T-cell (primary cell): ENCODE measurements at regions of chr1 and their contacts with region 1.

Region 1: DNA sequence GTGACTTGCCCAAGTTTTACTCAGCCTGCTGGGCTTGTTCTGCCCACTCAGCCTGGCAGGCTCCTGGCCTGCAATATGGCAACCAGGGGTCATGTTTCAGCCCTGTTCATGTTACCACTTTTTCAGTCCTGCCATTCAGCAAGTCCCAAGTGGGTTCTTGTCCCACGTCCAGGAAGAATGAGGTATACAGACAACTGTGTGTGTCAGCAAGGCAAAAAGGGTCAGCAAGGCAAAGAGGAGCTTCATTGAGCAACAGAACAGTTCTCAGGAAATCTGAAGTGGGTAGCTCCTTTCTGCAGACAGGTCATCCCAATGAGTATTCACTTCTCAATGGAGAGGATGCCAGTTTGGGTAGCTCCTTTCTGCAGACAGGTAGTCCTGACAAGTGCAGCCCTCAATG is 1233.3 kb upstream of the B3GALT2 start:
- DNase-seq: no peak
- ATAC-seq: no peak
- H3K4me3 ChIP-seq: no peak overlapping the region
- H3K4me3 Mint-ChIP-seq: no peak overlapping the region
- H3K27ac ChIP-seq: no peak overlapping the region
- H3K27ac Mint-ChIP-seq: no peak overlapping the region
- H3K4me1 ChIP-seq: no peaks in the 10 kb centered on the region
- H3K4me1 Mint-ChIP-seq: no peaks in the 10 kb centered on the region
- H3K27me3 ChIP-seq: peaks cover 0 to 4% of the 10 kb centered on the region in 2 experiments
- H3K27me3 Mint-ChIP-seq: no peaks in the 10 kb centered on the region

Region 2: DNA sequence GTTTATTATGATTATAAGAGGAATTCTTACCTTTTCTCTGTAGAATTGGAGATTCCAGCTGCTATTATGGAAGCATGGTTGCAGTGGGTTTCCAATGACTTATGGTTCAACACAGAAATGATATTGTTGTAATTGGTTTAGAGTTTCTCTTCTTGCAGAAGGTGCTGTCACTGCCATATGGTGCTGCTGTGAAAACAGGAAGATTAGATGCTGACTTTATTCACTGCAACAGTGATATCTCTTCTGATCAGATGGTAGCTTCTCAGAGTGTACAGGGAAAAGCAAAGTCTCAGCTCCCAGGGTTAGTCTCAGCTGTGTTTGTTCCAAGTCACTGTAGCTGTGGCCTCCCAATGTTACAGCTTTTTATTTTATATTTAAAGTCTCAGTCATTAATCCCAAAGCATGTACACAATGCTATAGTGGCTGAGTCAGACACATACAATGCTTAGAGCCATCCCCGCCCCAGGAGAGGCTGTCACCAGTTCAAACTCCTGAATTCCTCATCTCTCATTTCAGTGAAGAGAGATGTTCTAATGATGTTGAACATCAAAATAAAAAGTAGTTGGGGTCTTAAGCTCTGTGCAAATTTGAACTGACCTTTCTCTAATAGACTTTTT is 1653.6 kb before region 1 on chr1:
- CTCF ChIA-PET with region 1: interaction called in 1 of 2 experiments, 10 read pairs
- POLR2A ChIA-PET with region 1: no interaction called
- DNase-seq: no peak
- ATAC-seq: no peak
- H3K4me3 ChIP-seq: no peak overlapping the region
- H3K4me3 Mint-ChIP-seq: no peak overlapping the region
- H3K27ac ChIP-seq: no peak overlapping the region
- H3K27ac Mint-ChIP-seq: no peak overlapping the region
- H3K4me1 ChIP-seq: no peaks in the 10 kb centered on the region
- H3K4me1 Mint-ChIP-seq: no peaks in the 10 kb centered on the region
- H3K27me3 ChIP-seq: peaks cover 0 to 3% of the 10 kb centered on the region in 2 experiments
- H3K27me3 Mint-ChIP-seq: peaks cover 14 to 20% of the 10 kb centered on the region in 2 donors